Activated naive CD4-positive, alpha-beta T cell treated with anti-CD3 and anti-CD28 coated beads, Interleukin-2, amount 10 ng/mL, durations not matched to agents 7 days and 5 days (primary cell): ENCODE measurements at regions of chr3 and their contacts with region 1.

Region 1: DNA sequence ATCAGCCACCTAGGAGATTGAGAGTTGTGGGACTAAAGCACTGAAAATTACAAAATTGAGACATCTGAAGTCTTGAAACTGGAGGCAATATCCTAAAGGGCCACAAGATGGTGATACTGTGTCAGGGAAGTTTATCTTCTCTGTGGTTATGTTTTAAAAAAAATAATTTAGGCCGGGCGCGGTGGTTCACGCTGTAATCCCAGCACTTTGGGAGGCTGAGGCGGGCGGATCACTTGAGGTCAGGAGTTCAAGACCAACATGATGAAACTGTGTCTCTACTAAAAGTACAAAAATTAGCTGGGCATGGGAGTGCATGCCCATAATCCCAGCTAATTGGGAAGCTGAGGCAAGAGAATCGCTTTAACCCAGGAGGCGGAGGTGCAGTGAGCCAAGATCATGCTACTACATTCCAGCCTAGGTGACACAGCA is 17.9 kb upstream of the NIT2 start:
- DNase-seq: peak; percentile 55
- H3K4me3 Mint-ChIP-seq: no peak overlapping the region
- H3K27ac Mint-ChIP-seq: peak overlapping the region; percentile 38
- H3K4me1 Mint-ChIP-seq: peaks cover 19% of the 10 kb centered on the region
- H3K27me3 Mint-ChIP-seq: no peaks in the 10 kb centered on the region

Region 2: DNA sequence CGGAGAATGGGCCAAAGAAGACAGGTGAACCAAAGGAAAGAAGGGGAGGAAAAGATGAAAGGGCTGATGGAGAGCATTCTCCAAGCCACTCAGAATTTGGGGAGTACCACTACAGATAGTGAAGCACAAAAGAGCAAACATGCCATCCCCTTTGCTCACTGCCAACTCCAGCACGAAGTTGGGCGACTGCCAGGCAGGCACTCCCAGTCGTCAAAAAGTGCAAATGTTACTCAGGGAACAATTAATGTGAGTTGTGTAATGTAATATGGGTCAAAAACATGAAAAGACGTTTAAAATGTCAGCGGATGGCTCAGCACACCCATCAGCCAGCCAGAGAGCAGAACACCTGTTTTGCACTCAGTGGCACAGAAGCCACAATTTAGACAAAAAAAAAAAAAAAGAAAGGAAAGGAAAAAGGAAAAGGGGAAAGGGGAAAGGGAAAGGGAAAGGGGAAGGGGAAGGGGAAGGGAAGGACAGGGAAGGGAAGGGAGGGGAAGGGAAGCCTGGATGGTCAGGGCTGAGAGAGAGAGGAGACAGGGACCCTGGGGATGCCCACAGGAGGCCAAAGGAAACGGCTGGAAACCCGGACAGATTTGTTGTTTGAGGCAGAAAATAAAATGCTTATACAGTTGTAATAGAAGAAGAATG is 595.5 kb before region 1 on chr3:
- CTCF ChIA-PET with region 1: no interaction called
- DNase-seq: no peak
- H3K4me3 Mint-ChIP-seq: no peak overlapping the region
- H3K27ac Mint-ChIP-seq: peak overlapping the region; percentile 24
- H3K4me1 Mint-ChIP-seq: no peaks in the 10 kb centered on the region
- H3K27me3 Mint-ChIP-seq: no peaks in the 10 kb centered on the region

Region 3: DNA sequence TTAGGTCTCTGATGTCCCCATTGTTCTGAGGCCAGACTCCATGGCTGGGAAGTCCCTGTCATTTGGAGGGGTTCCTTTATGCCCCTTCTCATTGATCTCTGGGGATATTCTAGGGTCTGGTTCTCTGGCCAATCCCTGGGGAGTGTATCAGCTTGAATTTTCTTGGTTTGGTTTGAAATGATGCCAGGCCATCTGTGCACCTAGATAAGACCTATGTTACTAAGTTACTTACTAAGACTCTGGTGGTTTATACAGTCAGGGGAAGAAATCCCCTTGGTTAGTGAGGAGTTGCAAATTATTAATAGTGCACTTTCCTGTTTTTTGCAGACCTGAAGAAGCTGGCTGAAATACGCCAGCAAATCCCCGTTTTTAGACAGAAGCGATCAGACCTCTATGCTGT is 38.2 kb after region 1 on chr3:
- CTCF ChIA-PET with region 1: interaction called, 12 read pairs
- DNase-seq: no peak
- H3K4me3 Mint-ChIP-seq: no peak overlapping the region
- H3K27ac Mint-ChIP-seq: no peak overlapping the region
- H3K4me1 Mint-ChIP-seq: no peaks in the 10 kb centered on the region
- H3K27me3 Mint-ChIP-seq: no peaks in the 10 kb centered on the region

Region 4: GRCh38 chr3:100927775-100928174 is 611.1 kb after region 1 on chr3:
- CTCF ChIA-PET with region 1: no interaction called
- DNase-seq: no peak
- H3K4me3 Mint-ChIP-seq: no peak overlapping the region
- H3K27ac Mint-ChIP-seq: no peak overlapping the region
- H3K4me1 Mint-ChIP-seq: no peaks in the 10 kb centered on the region
- H3K27me3 Mint-ChIP-seq: no peaks in the 10 kb centered on the region